Left cardiac atrium (tissue), 4 donors: ENCODE measurements at regions of chr9 and their contacts with region 1.

Region 1: GRCh38 chr9:83538172-83538889 is at the start of gene FRMD3:
- DNase-seq: peak; percentile 89
- ATAC-seq: peak; percentile 96 to 97
- total RNA-seq, gene FRMD3: 40.0 to 63.6 TPM

Region 2: GRCh38 chr9:83219152-83219923 is 319.0 kb before region 1 on chr9:
- intact Hi-C with region 1: loop called in 1 of 2 experiments (anchors 1 kb)
- DNase-seq: peak; percentile 84
- ATAC-seq: peak; percentile 97 to 98